OCI-LY7 (cell line): ENCODE measurements at regions of chr4 and their contacts with region 1.

Region 1: GRCh38 chr4:119628308-119629141 is at the start of gene PDE5A:
- DNase-seq: peak; percentile 68
- H3K4me3 ChIP-seq: peak within 1 kb of the TSS; percentile 62
- H3K27ac ChIP-seq: no peak within 1 kb of the TSS
- H3K4me1 ChIP-seq: peaks cover 13% of the 10 kb centered on the region
- CTCF ChIP-seq: peak; percentile 70
- total RNA-seq, gene PDE5A: 0.22 and 1.5 TPM in 2 replicates

Region 2: GRCh38 chr4:119559044-119559647 is 69.4 kb before region 1 on chr4:
- CTCF ChIA-PET with region 1: no interaction called
- POLR2A ChIA-PET with region 1: interaction called, 4 read pairs
- intact Hi-C with region 1: loop called (anchors 2 kb)
- DNase-seq: peak; percentile 41
- H3K4me3 ChIP-seq: no peak overlapping the region
- H3K27ac ChIP-seq: no peak overlapping the region
- H3K4me1 ChIP-seq: no peaks in the 10 kb centered on the region
- CTCF ChIP-seq: peak; percentile 81

Region 3: GRCh38 chr4:119683518-119683917 is 55.0 kb after region 1 on chr4:
- CTCF ChIA-PET with region 1: no interaction called
- POLR2A ChIA-PET with region 1: no interaction called
- intact Hi-C with region 1: no loop called
- DNase-seq: no peak
- H3K4me3 ChIP-seq: no peak overlapping the region
- H3K27ac ChIP-seq: no peak overlapping the region
- H3K4me1 ChIP-seq: no peaks in the 10 kb centered on the region
- CTCF ChIP-seq: no peak

Region 4: GRCh38 chr4:120049732-120050494 is 421.4 kb after region 1 on chr4:
- CTCF ChIA-PET with region 1: no interaction called
- POLR2A ChIA-PET with region 1: interaction called, 4 read pairs
- intact Hi-C with region 1: loop called (anchors 1 kb)
- DNase-seq: peak; percentile 73
- H3K4me3 ChIP-seq: no peak overlapping the region
- H3K27ac ChIP-seq: no peak overlapping the region
- H3K4me1 ChIP-seq: peaks cover 13% of the 10 kb centered on the region
- CTCF ChIP-seq: peak; percentile 92